ENCODE measurements at regions of chr4 and their contacts with region 1.

Region 1: GRCh38 chr4:4418676-4419390 is 31.9 kb downstream of the NSG1 start:
- DNase-seq: no peak
- H3K4me3 ChIP-seq: no peak overlapping the region
- H3K4me3 Mint-ChIP-seq: peak overlapping the region in 7 of 8 donors; percentile 19 to 77 (median 67)
- H3K27ac ChIP-seq: no peak overlapping the region
- H3K27ac Mint-ChIP-seq: peak overlapping the region; percentile 66 to 90 (median 80)
- H3K4me1 ChIP-seq: peaks cover 33% of the 10 kb centered on the region
- H3K4me1 Mint-ChIP-seq: peaks cover 24 to 48% (median 37%) of the 10 kb centered on the region in 4 donors
- H3K27me3 ChIP-seq: no peaks in the 10 kb centered on the region
- H3K27me3 Mint-ChIP-seq: no peaks in the 10 kb centered on the region

Region 2: DNA sequence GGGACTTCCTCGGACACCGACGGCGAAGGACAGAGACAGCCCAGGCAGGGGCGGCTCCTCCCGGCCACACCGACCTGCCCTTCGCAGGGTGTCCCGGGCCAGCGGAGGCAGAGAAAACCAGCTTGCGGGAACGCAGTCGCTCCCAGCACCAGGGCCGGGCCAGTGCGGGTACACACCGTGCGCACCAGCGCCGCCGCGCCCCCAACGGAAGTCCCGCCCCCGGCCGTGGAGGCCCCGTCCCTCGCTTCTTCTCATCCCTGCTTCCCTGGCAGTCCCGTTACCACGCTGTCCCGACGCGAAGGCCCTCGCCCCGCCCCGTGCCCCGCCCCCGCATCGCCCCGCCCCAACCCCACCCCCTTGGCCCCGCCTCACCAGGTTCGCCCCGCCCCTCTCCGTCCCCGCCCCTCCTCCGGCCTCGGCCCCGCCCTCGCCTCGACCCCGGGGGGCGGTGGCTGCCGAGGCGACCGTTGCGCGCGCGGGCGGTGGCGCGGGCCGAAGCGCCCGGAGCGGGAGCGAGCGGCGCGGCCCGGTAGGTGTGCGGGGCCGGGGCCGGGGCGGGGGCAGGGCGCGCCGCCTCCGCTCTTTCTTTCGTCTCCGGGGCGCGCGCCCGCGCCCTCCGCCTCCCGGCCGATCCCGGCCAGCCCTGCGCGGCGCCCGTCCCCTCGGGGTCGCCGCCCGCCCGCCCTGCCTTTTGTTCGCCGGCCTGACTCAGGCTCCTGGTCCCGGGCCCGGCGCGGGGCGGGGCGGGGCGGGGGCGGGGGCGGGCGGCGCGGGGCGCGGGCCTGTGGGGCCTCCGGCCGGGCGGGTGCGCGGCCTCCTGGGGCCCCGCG is 1126.0 kb before region 1 on chr4 and contains the start of gene RGS12:
- CTCF ChIA-PET with region 1: no interaction called
- POLR2A ChIA-PET with region 1: no interaction called
- intact Hi-C with region 1: no loop called
- DNase-seq: peak; percentile 76 to 89 (median 78)
- H3K4me3 ChIP-seq: peak within 1 kb of the TSS; percentile 6 to 76
- H3K4me3 Mint-ChIP-seq: peak within 1 kb of the TSS; percentile 87 to 93 (median 92)
- H3K27ac ChIP-seq: peak within 1 kb of the TSS; percentile 52
- H3K27ac Mint-ChIP-seq: peak within 1 kb of the TSS; percentile 73 to 92 (median 84)
- H3K4me1 ChIP-seq: peaks cover 9% of the 10 kb centered on the region
- H3K4me1 Mint-ChIP-seq: peaks cover 10 to 29% (median 13%) of the 10 kb centered on the region in 4 donors
- H3K27me3 ChIP-seq: no peaks in the 10 kb centered on the region
- H3K27me3 Mint-ChIP-seq: peaks cover 3 to 4% of the 10 kb centered on the region in 2 donors
- total RNA-seq, gene RGS12: 9.7 to 10.6 TPM

Region 3: GRCh38 chr4:4461850-4462249 is 43.0 kb after region 1 on chr4:
- CTCF ChIA-PET with region 1: interaction called, 3 read pairs
- POLR2A ChIA-PET with region 1: interaction called, 3 read pairs
- intact Hi-C with region 1: loop called (anchors 5 kb)
- DNase-seq: peak; percentile 73 to 91 (median 87)
- H3K4me3 ChIP-seq: no peak overlapping the region
- H3K4me3 Mint-ChIP-seq: peak overlapping the region; percentile 73 to 91 (median 82)
- H3K27ac ChIP-seq: peak overlapping the region; percentile 52
- H3K27ac Mint-ChIP-seq: peak overlapping the region; percentile 92 to 99 (median 95)
- H3K4me1 ChIP-seq: peaks cover 48% of the 10 kb centered on the region
- H3K4me1 Mint-ChIP-seq: peaks cover 34 to 65% (median 51%) of the 10 kb centered on the region in 4 donors
- H3K27me3 ChIP-seq: no peaks in the 10 kb centered on the region
- H3K27me3 Mint-ChIP-seq: no peaks in the 10 kb centered on the region

Measured in CD4-positive, alpha-beta memory T cell (primary cell).